ENCODE measurements at regions of chr4 and their contacts with region 1.

Region 1: GRCh38 chr4:10164877-10165283 is 48.3 kb upstream of the WDR1 start:
- DNase-seq: peak; percentile 32
- CTCF ChIP-seq: peak; percentile 48

Region 2: DNA sequence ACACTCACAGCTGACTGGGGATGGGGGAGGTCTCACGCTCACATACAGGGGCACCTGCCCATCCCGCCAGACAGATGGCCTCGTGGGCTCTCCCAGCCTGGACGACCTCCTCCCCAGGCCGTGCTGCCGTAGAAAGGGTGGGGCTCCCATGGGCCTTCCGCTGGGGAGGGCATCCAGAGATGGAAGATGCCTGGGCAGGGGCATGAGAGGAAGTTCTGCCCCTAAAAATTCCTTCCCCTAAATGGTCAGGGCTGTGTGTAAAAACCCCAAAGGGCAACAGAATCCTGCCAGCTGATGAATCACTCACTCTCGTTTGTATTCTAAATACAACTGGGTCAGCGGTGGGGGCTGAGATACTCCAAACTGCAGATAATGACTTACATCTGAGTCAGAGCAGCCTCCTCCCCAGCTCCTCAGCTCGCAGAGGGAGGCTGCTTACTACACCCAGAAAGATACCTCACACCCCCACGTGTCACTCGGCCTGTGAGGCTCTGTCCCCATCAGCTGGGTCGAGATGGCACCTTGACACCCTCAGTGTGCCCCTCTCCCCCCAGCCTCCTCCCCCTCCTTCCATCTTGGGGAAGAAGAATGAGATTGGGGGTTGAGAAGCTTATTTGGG is 58.4 kb before region 1 on chr4:
- CTCF ChIA-PET with region 1: no interaction called
- POLR2A ChIA-PET with region 1: no interaction called
- DNase-seq: no peak
- CTCF ChIP-seq: no peak

Region 3: DNA sequence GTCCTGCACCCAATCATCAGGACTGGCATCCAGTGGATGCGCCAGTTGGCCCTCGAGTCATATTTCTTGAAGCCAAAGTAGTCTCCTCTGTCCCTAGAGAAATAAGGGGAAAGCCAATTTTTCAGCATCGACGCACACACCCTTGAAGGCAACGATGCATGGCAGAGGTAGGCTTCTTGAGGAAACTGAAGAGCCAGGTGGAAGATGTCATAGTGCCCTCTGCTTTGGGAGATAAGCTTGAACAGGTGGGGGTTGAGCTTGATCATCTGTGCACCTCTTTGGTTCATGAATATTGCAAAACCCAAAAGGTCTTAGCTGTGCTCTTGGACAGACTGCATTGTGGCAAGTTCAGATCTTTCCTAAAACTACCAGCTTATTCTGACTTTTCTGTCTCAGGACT is 13.7 kb before region 1 on chr4:
- CTCF ChIA-PET with region 1: interaction called, 21 read pairs
- POLR2A ChIA-PET with region 1: no interaction called
- DNase-seq: no peak
- CTCF ChIP-seq: no peak

Region 4: GRCh38 chr4:10403633-10404445 is 239.0 kb after region 1 on chr4:
- CTCF ChIA-PET with region 1: interaction called, 23 read pairs
- POLR2A ChIA-PET with region 1: no interaction called
- DNase-seq: peak; percentile 18
- CTCF ChIP-seq: peak; percentile 32